CD8-positive, alpha-beta T cell (primary cell): ENCODE measurements at regions of chr5 and their contacts with region 1.

Region 1: GRCh38 chr5:85500869-85501268 is 1116.2 kb upstream of the EDIL3 start:
- DNase-seq: no peak
- ATAC-seq: no peak
- H3K4me3 ChIP-seq: no peak overlapping the region
- H3K4me3 Mint-ChIP-seq: no peak overlapping the region
- H3K27ac ChIP-seq: no peak overlapping the region
- H3K27ac Mint-ChIP-seq: no peak overlapping the region
- H3K4me1 ChIP-seq: no peaks in the 10 kb centered on the region
- H3K4me1 Mint-ChIP-seq: no peaks in the 10 kb centered on the region
- H3K27me3 ChIP-seq: no peaks in the 10 kb centered on the region
- H3K27me3 Mint-ChIP-seq: no peaks in the 10 kb centered on the region
- CTCF ChIP-seq: no peak

Region 2: DNA sequence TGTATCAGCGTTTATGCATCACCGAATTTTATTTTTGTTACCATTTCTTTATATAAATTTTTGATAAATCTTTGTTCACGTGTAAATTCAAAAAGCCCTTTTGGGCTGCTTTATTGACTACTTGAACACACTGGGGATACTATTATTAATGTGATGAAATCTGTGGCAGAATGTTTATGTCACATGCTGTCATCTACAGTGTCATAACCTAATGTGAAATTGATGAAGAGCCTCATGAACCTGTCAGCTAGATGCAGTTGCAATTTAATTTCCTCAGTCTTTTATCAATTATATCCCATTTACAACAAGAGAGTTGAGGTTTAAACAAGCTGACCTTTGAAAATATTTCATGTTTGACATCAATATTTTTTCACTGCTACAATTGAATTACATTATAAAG is 16.5 kb after region 1 on chr5:
- CTCF ChIA-PET with region 1: no interaction called
- POLR2A ChIA-PET with region 1: no interaction called
- intact Hi-C with region 1: no loop called
- DNase-seq: no peak
- ATAC-seq: no peak
- H3K4me3 ChIP-seq: no peak overlapping the region
- H3K4me3 Mint-ChIP-seq: no peak overlapping the region
- H3K27ac ChIP-seq: no peak overlapping the region
- H3K27ac Mint-ChIP-seq: no peak overlapping the region
- H3K4me1 ChIP-seq: no peaks in the 10 kb centered on the region
- H3K4me1 Mint-ChIP-seq: no peaks in the 10 kb centered on the region
- H3K27me3 ChIP-seq: no peaks in the 10 kb centered on the region
- H3K27me3 Mint-ChIP-seq: no peaks in the 10 kb centered on the region
- CTCF ChIP-seq: no peak

Region 3: DNA sequence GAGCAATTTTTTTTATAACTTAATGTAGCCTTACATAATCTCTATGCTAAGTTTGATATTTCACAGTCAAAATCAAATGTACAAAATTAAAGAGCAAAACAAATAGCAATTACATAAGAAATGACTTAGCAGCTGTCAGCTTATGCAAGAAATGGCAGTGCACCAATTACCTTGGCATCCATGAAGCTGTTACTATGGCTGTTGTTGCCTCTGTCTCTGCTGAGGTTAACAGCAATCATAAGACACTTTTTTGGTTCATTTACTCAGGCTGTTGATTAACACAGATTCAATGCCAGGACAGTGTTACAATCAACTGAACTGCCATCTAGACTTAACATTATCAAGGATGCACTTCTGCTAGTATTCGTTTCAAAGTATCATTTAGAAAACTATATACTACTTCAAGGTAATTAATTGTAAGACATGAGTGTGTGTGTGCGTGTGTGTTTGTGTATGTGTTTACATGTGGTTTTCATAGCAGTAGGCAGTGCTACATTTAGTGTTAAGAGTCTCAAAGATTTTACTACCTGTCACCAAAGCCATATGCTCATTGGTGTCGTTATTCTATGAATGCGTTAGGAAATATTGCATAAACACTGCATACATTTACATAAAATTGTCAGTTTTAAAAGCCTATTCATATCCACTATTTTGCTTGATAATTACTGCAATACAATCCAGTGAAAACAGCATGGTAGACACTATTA is 32.6 kb after region 1 on chr5:
- CTCF ChIA-PET with region 1: no interaction called
- POLR2A ChIA-PET with region 1: no interaction called
- intact Hi-C with region 1: loop called in 1 of 2 experiments (anchors 1 kb)
- DNase-seq: no peak
- ATAC-seq: no peak
- H3K4me3 ChIP-seq: no peak overlapping the region
- H3K4me3 Mint-ChIP-seq: no peak overlapping the region
- H3K27ac ChIP-seq: no peak overlapping the region
- H3K27ac Mint-ChIP-seq: no peak overlapping the region
- H3K4me1 ChIP-seq: no peaks in the 10 kb centered on the region
- H3K4me1 Mint-ChIP-seq: no peaks in the 10 kb centered on the region
- H3K27me3 ChIP-seq: no peaks in the 10 kb centered on the region
- H3K27me3 Mint-ChIP-seq: no peaks in the 10 kb centered on the region
- CTCF ChIP-seq: no peak